Mammary epithelial cell (primary cell): ENCODE measurements at regions of chr16 and their contacts with region 1.

Region 1: GRCh38 chr16:50925758-50926357 is 184.0 kb downstream of the CYLD start:
- DNase-seq: peak; percentile 80
- H3K4me3 ChIP-seq: no peak overlapping the region
- H3K27ac ChIP-seq: peak overlapping the region; percentile 40
- H3K4me1 ChIP-seq: peaks cover 30% of the 10 kb centered on the region
- H3K27me3 ChIP-seq: no peaks in the 10 kb centered on the region
- CTCF ChIP-seq: no peak

Region 2: GRCh38 chr16:51569203-51569931 is 643.5 kb after region 1 on chr16:
- CTCF ChIA-PET with region 1: interaction called, 43 read pairs
- dilution Hi-C with region 1: no loop called
- in situ Hi-C with region 1: no loop called
- intact Hi-C with region 1: no loop called
- DNase-seq: peak; percentile 89
- H3K4me3 ChIP-seq: no peak overlapping the region
- H3K27ac ChIP-seq: peak overlapping the region; percentile 51
- H3K4me1 ChIP-seq: peaks cover 22% of the 10 kb centered on the region
- H3K27me3 ChIP-seq: no peaks in the 10 kb centered on the region
- CTCF ChIP-seq: no peak